Psoas muscle (tissue), 8 donors: ENCODE measurements at regions of chr6 and their contacts with region 1.

Region 1: GRCh38 chr6:129498950-129499842 is 210.8 kb downstream of the ARHGAP18 start:
- DNase-seq: no peak
- ATAC-seq: peak in 2 of 4 donors; percentile 44 to 58
- H3K4me3 ChIP-seq: peak overlapping the region; percentile 16
- H3K27ac ChIP-seq: no peak overlapping the region
- H3K4me1 ChIP-seq: peaks cover 40% of the 10 kb centered on the region
- H3K27me3 ChIP-seq: no peaks in the 10 kb centered on the region
- CTCF ChIP-seq: peak; percentile 70

Region 2: GRCh38 chr6:129448965-129449364 is 50.2 kb before region 1 on chr6:
- intact Hi-C with region 1: no loop called
- DNase-seq: no peak
- ATAC-seq: no peak
- H3K4me3 ChIP-seq: no peak overlapping the region
- H3K27ac ChIP-seq: no peak overlapping the region
- H3K4me1 ChIP-seq: no peaks in the 10 kb centered on the region
- H3K27me3 ChIP-seq: no peaks in the 10 kb centered on the region
- CTCF ChIP-seq: no peak

Region 3: GRCh38 chr6:129460221-129460620 is 39.0 kb before region 1 on chr6:
- intact Hi-C with region 1: no loop called
- DNase-seq: no peak
- ATAC-seq: no peak
- H3K4me3 ChIP-seq: no peak overlapping the region
- H3K27ac ChIP-seq: no peak overlapping the region
- H3K4me1 ChIP-seq: no peaks in the 10 kb centered on the region
- H3K27me3 ChIP-seq: no peaks in the 10 kb centered on the region
- CTCF ChIP-seq: no peak

Region 4: DNA sequence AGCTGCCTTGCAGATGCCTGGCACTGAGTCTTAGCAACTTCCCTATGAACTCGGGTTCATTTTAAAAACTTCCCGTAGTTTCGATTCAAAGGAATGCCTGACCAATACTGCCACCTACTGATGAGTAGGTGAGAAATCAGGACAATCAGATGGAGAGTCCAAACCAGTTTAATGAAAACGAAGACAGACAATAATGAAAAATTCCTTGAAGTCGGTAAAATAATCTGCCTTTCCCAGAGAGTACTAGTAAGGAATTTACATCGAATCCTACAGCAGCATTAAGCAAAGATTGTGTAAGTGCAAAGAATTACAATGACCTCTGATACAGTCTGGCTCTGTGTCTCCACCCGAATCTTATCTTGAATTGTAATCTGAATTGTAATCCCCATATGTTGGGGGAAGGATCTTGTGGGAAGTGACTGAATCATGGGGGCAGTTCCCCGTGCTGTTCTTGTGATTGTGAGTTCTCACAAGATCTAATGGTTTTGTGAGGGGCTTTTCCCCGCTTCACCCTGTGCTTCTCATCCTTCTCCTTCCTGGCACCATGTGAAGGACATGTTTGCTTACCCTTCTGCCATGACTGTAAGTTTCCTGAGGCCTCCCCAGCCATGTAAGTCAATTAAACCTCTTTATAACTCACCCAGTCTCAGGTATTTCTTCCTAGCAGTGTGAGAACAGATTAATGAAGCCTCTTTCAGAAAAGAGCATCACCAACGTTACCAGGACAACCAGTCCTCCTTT is 76.4 kb after region 1 on chr6:
- intact Hi-C with region 1: loop called (anchors 1 to 2 kb)
- DNase-seq: no peak
- ATAC-seq: peak; percentile 59 to 88 (median 64)
- H3K4me3 ChIP-seq: peak overlapping the region; percentile 47
- H3K27ac ChIP-seq: no peak overlapping the region
- H3K4me1 ChIP-seq: no peaks in the 10 kb centered on the region
- H3K27me3 ChIP-seq: no peaks in the 10 kb centered on the region
- CTCF ChIP-seq: peak; percentile 72

Region 5: GRCh38 chr6:129748212-129748900 is 249.2 kb after region 1 on chr6:
- intact Hi-C with region 1: loop called in 1 of 2 experiments (anchors 5 kb)
- DNase-seq: peak in 1 of 2 donors; percentile 13
- ATAC-seq: peak; percentile 64 to 80 (median 73)
- H3K4me3 ChIP-seq: no peak overlapping the region
- H3K27ac ChIP-seq: peak overlapping the region; percentile 37
- H3K4me1 ChIP-seq: peaks cover 31% of the 10 kb centered on the region
- H3K27me3 ChIP-seq: no peaks in the 10 kb centered on the region
- CTCF ChIP-seq: no peak